ENCODE measurements at regions of chr6 and their contacts with region 1.

Region 1: GRCh38 chr6:27687154-27688013 is 214.5 kb upstream of the ZNF184 start:
- DNase-seq: peak; percentile 58 to 88 (median 74)
- ATAC-seq: peak; percentile 72
- H3K4me3 ChIP-seq: peak overlapping the region; percentile 60 to 74
- H3K4me3 Mint-ChIP-seq: peak overlapping the region; percentile 94
- H3K27ac ChIP-seq: peak overlapping the region; percentile 15 to 55
- H3K27ac Mint-ChIP-seq: peak overlapping the region; percentile 93
- H3K4me1 ChIP-seq: peaks cover 3% of the 10 kb centered on the region
- H3K4me1 Mint-ChIP-seq: peaks cover 18% of the 10 kb centered on the region
- H3K27me3 ChIP-seq: no peaks in the 10 kb centered on the region
- H3K27me3 Mint-ChIP-seq: peaks cover 6% of the 10 kb centered on the region
- CTCF ChIP-seq: peak; percentile 67

Region 2: DNA sequence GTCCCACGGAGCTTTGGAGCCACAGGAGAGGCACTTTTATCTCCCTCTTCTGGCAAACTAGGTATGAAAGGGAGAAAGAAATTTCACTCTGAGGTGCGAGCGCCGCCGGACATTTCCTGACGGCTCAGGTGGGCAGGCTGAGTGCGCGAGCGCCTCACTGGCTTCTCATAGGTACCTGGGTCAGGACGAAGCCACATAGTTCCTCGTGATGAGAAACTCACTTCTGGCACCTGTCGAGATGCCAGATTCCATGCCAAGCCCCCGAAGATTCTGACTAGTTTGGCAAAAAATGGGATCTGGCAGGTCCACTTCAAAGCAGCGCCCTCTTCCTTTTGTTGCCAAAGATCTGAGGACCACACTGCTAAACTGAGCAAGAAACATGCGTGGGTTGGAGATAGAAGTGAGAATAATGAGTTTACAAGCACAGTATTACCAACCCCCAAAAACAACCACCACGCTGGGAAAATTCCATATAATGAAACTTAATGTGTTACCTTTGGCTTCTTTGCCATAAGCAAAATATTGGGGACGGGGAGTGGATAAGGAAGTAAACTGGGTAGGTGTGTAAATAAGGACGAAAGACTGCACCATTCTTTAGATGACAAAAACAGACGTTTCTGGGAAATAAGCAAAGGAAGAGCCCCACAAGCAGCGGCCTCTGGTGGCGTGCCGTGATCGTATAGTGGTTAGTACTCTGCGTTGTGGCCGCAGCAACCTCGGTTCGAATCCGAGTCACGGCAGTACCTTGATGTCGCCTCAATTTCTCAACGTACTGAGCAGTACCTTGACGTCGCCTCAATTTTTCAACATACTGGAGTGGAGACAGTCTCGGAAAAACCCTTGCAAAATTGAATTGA is 529.7 kb before region 1 on chr6:
- CTCF ChIA-PET with region 1: no interaction called
- POLR2A ChIA-PET with region 1: no interaction called
- intact Hi-C with region 1: loop called in 1 of 2 experiments (anchors 5 kb)
- DNase-seq: peak; percentile 72 to 91 (median 86)
- ATAC-seq: peak; percentile 75
- H3K4me3 ChIP-seq: peak overlapping the region; percentile 55 to 60
- H3K4me3 Mint-ChIP-seq: peak overlapping the region; percentile 85
- H3K27ac ChIP-seq: peak overlapping the region; percentile 18 to 23
- H3K27ac Mint-ChIP-seq: peak overlapping the region; percentile 87
- H3K4me1 ChIP-seq: peaks cover 13% of the 10 kb centered on the region
- H3K4me1 Mint-ChIP-seq: peaks cover 38% of the 10 kb centered on the region
- H3K27me3 ChIP-seq: no peaks in the 10 kb centered on the region
- H3K27me3 Mint-ChIP-seq: no peaks in the 10 kb centered on the region
- CTCF ChIP-seq: peak; percentile 48

Region 3: DNA sequence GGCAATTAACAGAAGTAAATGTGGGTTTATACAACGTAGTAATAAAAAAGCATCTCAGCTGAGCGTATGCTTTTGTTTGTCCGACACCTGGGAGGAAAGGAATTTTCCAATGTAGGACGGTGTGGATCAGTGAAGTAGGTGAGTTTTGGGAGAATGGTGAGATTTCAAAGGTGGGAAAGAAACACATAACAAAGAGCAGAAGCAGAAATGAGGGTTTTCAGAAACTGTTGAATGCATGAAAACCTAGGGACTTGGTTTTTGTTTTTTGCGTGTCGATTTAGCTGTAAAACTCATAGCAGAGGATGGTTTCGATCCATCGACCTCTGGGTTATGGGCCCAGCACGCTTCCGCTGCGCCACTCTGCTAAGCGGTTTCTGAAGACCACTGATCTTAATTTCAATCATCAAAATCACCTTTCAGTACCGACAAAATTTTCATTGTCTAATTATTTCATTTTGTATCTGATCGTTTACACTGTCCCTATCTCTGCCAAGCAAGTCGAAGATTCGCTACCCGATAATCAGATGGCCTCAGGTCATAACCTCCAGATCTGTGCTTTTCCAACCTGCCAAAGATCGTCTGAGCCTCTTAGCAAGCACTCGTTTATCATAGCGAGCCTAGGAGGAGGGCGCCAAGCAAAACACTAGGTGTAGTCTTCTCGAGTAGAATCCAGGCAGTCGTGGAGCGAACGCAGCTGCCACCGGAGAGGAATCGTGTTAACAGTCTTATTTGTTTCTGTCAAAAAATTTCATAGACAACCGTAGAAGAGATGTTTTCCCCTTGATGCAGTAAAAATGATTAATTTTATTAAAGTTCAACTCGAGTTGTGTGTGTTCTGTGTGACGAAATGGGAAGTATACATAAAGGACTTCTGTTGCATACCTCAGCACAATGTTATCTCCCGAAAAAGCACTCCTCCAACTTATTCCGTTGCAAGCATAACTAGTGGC is 354.4 kb before region 1 on chr6:
- CTCF ChIA-PET with region 1: no interaction called
- POLR2A ChIA-PET with region 1: no interaction called
- intact Hi-C with region 1: loop called in 1 of 2 experiments (anchors 5 kb)
- DNase-seq: peak in 8 of 9 experiments; percentile 12 to 78 (median 60)
- ATAC-seq: peak; percentile 86
- H3K4me3 ChIP-seq: peak overlapping the region; percentile 53
- H3K4me3 Mint-ChIP-seq: peak overlapping the region; percentile 87
- H3K27ac ChIP-seq: no peak overlapping the region
- H3K27ac Mint-ChIP-seq: peak overlapping the region; percentile 82
- H3K4me1 ChIP-seq: no peaks in the 10 kb centered on the region
- H3K4me1 Mint-ChIP-seq: peaks cover 15% of the 10 kb centered on the region
- H3K27me3 ChIP-seq: peaks cover 0 to 4% of the 10 kb centered on the region in 2 experiments
- H3K27me3 Mint-ChIP-seq: peaks cover 21% of the 10 kb centered on the region
- CTCF ChIP-seq: no peak

Region 4: DNA sequence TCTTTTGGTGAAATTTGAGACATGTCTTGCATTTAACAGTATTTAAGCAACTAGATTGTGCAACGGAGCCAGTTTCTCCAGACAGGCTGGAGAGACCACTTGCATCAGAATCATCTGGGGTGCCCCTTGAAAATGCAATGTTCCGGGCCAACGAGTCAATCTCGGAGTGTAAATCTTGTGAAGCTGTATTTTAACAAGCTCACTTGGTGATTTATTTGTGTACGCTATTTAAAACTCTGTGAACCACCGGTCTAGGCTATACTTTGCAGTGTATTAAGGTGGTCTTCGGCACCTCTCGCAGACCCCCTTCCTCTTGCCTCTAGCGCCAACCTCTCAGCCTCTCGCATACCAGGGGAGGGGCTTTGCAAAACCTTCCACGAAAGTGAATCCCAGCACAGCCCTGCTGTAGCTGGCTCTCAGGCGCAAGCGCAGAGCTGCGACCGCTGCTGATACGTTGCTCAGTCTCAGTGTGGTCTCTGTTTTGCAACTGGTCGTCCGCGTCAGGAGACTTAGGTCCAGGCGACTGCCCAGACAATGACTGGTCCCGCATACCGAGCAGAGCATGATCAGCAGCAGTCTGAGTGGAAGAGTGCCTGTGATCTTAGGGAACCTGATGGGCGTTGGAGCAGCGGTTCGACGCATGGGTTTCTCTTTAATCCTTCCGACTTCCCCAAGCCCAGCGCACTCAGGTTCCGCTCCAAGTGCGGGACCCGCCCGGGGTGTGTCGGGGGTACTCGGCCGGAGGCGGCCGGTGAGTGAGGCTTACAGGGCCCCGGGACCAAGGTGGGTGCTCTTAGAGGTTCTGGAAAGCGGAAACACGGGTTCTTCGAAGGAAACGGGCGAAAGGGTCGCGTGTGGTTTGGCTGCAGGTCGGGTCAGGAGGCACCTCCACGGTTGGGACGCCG is 298.8 kb before region 1 on chr6 and contains the start of gene ZNF391:
- CTCF ChIA-PET with region 1: no interaction called
- POLR2A ChIA-PET with region 1: no interaction called
- intact Hi-C with region 1: no loop called
- DNase-seq: peak; percentile 41 to 86 (median 67)
- ATAC-seq: peak; percentile 90
- H3K4me3 ChIP-seq: peak within 1 kb of the TSS; percentile 66 to 72
- H3K4me3 Mint-ChIP-seq: peak within 1 kb of the TSS; percentile 98
- H3K27ac ChIP-seq: peak within 1 kb of the TSS; percentile 45 to 55
- H3K27ac Mint-ChIP-seq: peak within 1 kb of the TSS; percentile 94
- H3K4me1 ChIP-seq: peaks cover 9% of the 10 kb centered on the region
- H3K4me1 Mint-ChIP-seq: peaks cover 15% of the 10 kb centered on the region
- H3K27me3 ChIP-seq: no peaks in the 10 kb centered on the region
- H3K27me3 Mint-ChIP-seq: no peaks in the 10 kb centered on the region
- CTCF ChIP-seq: no peak
- total RNA-seq, gene ZNF391: 0.72 to 1.1 TPM

Region 5: GRCh38 chr6:27518881-27519795 is 168.2 kb before region 1 on chr6:
- CTCF ChIA-PET with region 1: no interaction called
- POLR2A ChIA-PET with region 1: no interaction called
- intact Hi-C with region 1: loop called (anchors 1 to 5 kb)
- DNase-seq: peak; percentile 29 to 88 (median 61)
- ATAC-seq: peak; percentile 78
- H3K4me3 ChIP-seq: peak overlapping the region; percentile 74 to 88
- H3K4me3 Mint-ChIP-seq: peak overlapping the region; percentile 83
- H3K27ac ChIP-seq: peak overlapping the region; percentile 59 to 72
- H3K27ac Mint-ChIP-seq: peak overlapping the region; percentile 83
- H3K4me1 ChIP-seq: peaks cover 10% of the 10 kb centered on the region
- H3K4me1 Mint-ChIP-seq: peaks cover 19% of the 10 kb centered on the region
- H3K27me3 ChIP-seq: peaks cover 0 to 9% of the 10 kb centered on the region in 2 experiments
- H3K27me3 Mint-ChIP-seq: peaks cover 18% of the 10 kb centered on the region
- CTCF ChIP-seq: peak; percentile 77

Region 6: GRCh38 chr6:27624694-27625262 is 62.6 kb before region 1 on chr6:
- CTCF ChIA-PET with region 1: no interaction called
- POLR2A ChIA-PET with region 1: no interaction called
- intact Hi-C with region 1: no loop called
- DNase-seq: no peak
- ATAC-seq: no peak
- H3K4me3 ChIP-seq: no peak overlapping the region
- H3K4me3 Mint-ChIP-seq: no peak overlapping the region
- H3K27ac ChIP-seq: no peak overlapping the region
- H3K27ac Mint-ChIP-seq: no peak overlapping the region
- H3K4me1 ChIP-seq: no peaks in the 10 kb centered on the region
- H3K4me1 Mint-ChIP-seq: no peaks in the 10 kb centered on the region
- H3K27me3 ChIP-seq: peaks cover 6 to 9% of the 10 kb centered on the region in 2 experiments
- H3K27me3 Mint-ChIP-seq: peaks cover 60% of the 10 kb centered on the region
- CTCF ChIP-seq: no peak

Region 7: DNA sequence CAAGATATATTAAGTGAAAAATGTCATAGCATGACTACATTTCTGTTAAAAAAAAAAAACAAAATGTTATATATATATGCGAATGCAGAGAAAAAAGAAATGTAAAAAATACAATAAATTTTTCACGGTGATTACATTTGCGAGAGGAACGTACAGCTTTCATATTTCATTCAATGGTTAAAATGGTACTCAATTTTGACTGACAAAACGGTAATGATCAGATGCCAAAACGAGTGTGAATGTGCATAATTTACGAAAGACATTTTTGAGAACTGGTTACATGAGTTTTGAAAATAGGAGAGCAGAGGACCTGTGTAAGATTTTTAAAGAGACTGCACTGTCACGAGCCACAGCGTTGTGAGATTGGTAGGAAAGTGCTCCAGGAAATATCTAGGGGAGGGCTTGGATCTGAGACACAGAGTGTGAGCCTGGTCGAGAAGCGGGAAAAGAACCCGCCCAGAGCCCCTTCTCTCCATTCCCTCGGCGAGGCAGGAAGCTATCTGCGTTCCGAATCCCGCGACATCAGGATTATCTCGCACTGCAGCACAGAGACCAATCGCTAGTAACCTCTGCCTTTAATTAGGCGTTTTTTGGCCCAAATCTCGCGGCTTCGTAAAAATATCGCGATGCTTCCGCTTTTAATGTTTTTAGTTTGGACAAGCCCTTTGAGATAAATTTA is 1207.9 kb after region 1 on chr6:
- CTCF ChIA-PET with region 1: no interaction called
- POLR2A ChIA-PET with region 1: no interaction called
- intact Hi-C with region 1: loop called in 1 of 2 experiments (anchors 5 kb)
- DNase-seq: peak; percentile 83 to 97 (median 90)
- ATAC-seq: peak; percentile 68
- H3K4me3 ChIP-seq: peak overlapping the region; percentile 79 to 80
- H3K4me3 Mint-ChIP-seq: peak overlapping the region; percentile 98
- H3K27ac ChIP-seq: peak overlapping the region; percentile 95 to 98
- H3K27ac Mint-ChIP-seq: peak overlapping the region; percentile 99
- H3K4me1 ChIP-seq: peaks cover 8% of the 10 kb centered on the region
- H3K4me1 Mint-ChIP-seq: peaks cover 18% of the 10 kb centered on the region
- H3K27me3 ChIP-seq: no peaks in the 10 kb centered on the region
- H3K27me3 Mint-ChIP-seq: no peaks in the 10 kb centered on the region
- CTCF ChIP-seq: no peak